Mammary epithelial cell (primary cell): ENCODE measurements at regions of chr18 and their contacts with region 1.

Region 1: DNA sequence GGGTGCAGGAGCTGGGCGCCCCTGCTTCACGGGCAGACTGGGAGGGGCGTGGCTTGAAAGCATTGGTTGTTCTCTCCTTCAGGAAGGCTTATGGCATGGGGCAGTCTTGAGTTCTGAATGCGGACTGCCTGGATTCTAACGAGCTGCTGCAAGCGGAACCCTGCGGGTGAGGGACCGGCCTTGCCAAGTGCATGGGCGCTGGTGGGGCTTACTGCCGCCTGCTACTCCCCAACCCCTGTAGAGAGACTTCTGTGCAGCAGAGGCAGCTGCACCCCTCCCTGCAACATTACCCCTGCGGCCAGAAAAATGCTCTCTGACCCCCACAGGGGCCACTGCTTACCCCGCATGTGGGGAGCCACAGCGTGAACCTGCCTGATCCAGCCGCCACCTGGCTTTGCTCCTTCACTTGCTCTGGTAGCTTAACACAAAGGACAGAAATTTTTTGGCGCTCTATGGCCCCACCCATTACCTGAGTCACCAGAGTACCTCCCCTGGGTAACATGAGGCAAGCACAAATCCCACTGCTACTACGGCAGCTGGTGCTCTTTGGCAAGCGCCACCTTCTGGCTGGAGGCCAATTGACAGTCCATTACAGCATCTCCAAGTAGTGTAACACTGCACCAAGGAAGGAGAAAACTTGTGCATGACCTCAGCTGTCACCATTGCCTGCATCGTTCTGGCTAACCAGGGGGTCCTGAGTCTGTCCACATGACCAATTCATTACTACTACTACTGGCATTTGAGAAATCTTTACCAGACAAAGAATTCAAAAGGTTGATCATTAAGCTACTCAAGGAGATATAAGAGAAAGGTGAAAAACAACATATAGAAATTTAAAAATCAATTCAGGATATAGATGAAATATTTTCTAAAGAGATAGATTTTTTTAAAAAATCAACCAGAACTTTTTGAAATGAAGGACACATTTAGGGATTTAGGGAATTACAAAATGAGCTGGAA is 35.4 kb downstream of the MYL12B start:
- DNase-seq: peak; percentile 93
- H3K4me3 ChIP-seq: peak overlapping the region; percentile 68 to 79 (median 68)
- H3K27ac ChIP-seq: peak overlapping the region; percentile 72
- H3K4me1 ChIP-seq: peaks cover 7% of the 10 kb centered on the region
- H3K27me3 ChIP-seq: no peaks in the 10 kb centered on the region
- CTCF ChIP-seq: peak; percentile 69 to 84

Region 2: GRCh38 chr18:3062798-3063680 is 234.3 kb before region 1 on chr18:
- CTCF ChIA-PET with region 1: no interaction called
- dilution Hi-C with region 1: no loop called
- in situ Hi-C with region 1: no loop called
- intact Hi-C with region 1: no loop called
- DNase-seq: peak; percentile 21
- H3K4me3 ChIP-seq: no peak overlapping the region
- H3K27ac ChIP-seq: no peak overlapping the region
- H3K4me1 ChIP-seq: no peaks in the 10 kb centered on the region
- H3K27me3 ChIP-seq: no peaks in the 10 kb centered on the region
- CTCF ChIP-seq: peak; percentile 67 to 84

Region 3: GRCh38 chr18:3135536-3135935 is 161.8 kb before region 1 on chr18:
- CTCF ChIA-PET with region 1: no interaction called
- dilution Hi-C with region 1: no loop called
- in situ Hi-C with region 1: no loop called
- intact Hi-C with region 1: no loop called
- DNase-seq: no peak
- H3K4me3 ChIP-seq: no peak overlapping the region
- H3K27ac ChIP-seq: no peak overlapping the region
- H3K4me1 ChIP-seq: no peaks in the 10 kb centered on the region
- H3K27me3 ChIP-seq: no peaks in the 10 kb centered on the region
- CTCF ChIP-seq: no peak

Region 4: DNA sequence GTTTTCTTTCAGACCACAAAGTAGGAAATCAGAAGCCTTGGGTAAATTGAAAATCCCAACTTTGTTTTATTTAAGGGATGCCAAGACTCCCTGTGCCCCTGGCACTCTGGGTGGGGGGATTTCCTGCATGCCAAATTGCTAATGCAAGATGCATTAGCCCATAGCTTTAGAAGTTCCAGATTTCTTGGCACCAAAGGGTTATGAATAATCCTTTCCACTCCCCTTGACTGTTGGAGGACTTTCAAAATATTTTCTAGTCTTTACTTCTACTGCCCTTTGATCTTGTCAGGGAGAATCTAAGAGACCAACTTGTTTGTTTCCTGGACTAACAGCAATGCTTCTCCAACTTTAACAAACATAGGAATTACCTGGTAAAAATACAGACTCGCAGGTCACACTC is 70.9 kb after region 1 on chr18:
- CTCF ChIA-PET with region 1: no interaction called
- dilution Hi-C with region 1: no loop called
- in situ Hi-C with region 1: no loop called
- intact Hi-C with region 1: loop called (anchors 5 kb)
- DNase-seq: peak; percentile 86
- H3K4me3 ChIP-seq: peak overlapping the region in 2 of 3 experiments; percentile 8 to 18
- H3K27ac ChIP-seq: peak overlapping the region; percentile 97
- H3K4me1 ChIP-seq: peaks cover 25% of the 10 kb centered on the region
- H3K27me3 ChIP-seq: no peaks in the 10 kb centered on the region
- CTCF ChIP-seq: no peak

Region 5: GRCh38 chr18:3454365-3455089 is 157.2 kb after region 1 on chr18:
- CTCF ChIA-PET with region 1: interaction called, 10 read pairs
- dilution Hi-C with region 1: loop called (anchors 10 kb)
- in situ Hi-C with region 1: loop called in 1 of 2 experiments (anchors 10 kb)
- intact Hi-C with region 1: no loop called
- DNase-seq: peak; percentile 46
- H3K4me3 ChIP-seq: peak overlapping the region; percentile 48 to 91 (median 75)
- H3K27ac ChIP-seq: peak overlapping the region; percentile 97
- H3K4me1 ChIP-seq: peaks cover 41% of the 10 kb centered on the region
- H3K27me3 ChIP-seq: no peaks in the 10 kb centered on the region
- CTCF ChIP-seq: peak; percentile 60 to 63

Region 6: DNA sequence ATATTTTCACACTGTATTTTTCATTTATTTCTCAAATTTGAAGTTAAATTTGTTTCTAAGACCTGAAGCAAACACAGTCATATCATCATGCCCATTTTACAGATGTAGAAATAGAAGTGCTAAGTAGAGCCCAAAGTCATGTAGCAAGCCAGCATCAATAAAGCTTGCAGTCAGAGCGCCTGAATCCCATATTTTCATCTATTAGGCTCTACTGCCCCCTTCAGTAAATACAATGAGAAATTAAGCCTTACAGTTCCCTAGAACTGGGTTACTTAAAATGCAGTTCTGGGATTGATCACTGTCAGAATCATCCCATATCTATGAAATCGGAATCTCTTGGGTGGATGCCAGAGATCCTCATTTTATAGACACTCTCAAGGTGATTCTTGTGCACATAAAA is 572.5 kb after region 1 on chr18:
- CTCF ChIA-PET with region 1: no interaction called
- dilution Hi-C with region 1: no loop called
- in situ Hi-C with region 1: loop called in 1 of 2 experiments (anchors 25 kb)
- intact Hi-C with region 1: no loop called
- DNase-seq: peak; percentile 37
- H3K4me3 ChIP-seq: no peak overlapping the region
- H3K27ac ChIP-seq: no peak overlapping the region
- H3K4me1 ChIP-seq: no peaks in the 10 kb centered on the region
- H3K27me3 ChIP-seq: peaks cover 1% of the 10 kb centered on the region
- CTCF ChIP-seq: peak; percentile 46 to 59